Activated CD4-positive, alpha-beta T cell treated with anti-CD3 and anti-CD28 coated beads, Interleukin-2, amount 10 ng/mL, durations not matched to agents 7 days and 5 days (primary cell): ENCODE measurements at regions of chr17 and their contacts with region 1.

Region 1: DNA sequence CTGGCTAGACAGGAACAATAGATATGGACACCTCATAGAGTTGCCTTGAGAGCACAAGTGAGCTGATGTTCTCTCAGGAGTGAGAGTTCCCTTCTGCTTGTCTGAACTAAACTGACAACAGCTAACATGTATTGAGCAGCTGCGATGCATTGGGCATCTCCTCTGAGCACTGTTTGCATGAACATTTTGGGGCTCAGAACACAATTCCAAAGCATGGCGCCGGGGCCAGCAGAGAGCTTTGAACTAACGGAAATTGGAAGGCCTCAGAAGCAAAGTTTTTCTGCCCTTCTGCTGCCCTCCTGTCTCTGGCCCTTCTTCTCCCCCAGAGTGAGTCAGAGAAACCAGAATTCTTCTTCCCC is 38.1 kb downstream of the TRPV2 start:
- DNase-seq: no peak
- H3K4me3 Mint-ChIP-seq: no peak overlapping the region
- H3K27ac Mint-ChIP-seq: peak overlapping the region; percentile 71
- H3K4me1 Mint-ChIP-seq: peaks cover 10% of the 10 kb centered on the region
- H3K27me3 Mint-ChIP-seq: no peaks in the 10 kb centered on the region

Region 2: DNA sequence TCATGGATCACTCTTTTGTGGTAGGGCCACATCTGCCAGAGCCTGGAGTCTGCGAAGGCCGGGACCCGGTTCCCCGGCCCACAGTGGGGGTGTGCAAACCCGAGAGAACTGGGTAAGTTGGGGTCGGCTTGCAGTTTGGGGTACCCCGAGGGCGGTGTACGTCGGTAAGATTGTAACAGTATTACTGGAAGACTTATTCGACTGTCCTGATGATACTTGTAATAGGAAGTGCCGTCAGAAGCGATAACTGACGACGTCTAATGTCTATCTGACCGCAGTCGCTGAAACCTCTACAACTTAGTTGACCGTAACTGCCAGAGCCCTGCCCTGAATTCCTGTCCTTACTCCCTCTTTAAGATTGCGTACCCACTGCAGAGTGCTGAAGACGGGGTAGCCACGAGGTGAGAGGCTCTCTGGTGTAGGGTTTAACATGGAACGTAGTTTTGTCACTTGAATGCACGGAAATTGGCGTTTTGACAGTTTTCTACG is 14.1 kb before region 1 on chr17:
- CTCF ChIA-PET with region 1: interaction called, 27 read pairs
- POLR2A ChIA-PET with region 1: no interaction called
- DNase-seq: peak; percentile 27
- H3K4me3 Mint-ChIP-seq: peak overlapping the region; percentile 100
- H3K27ac Mint-ChIP-seq: peak overlapping the region; percentile 99
- H3K4me1 Mint-ChIP-seq: peaks cover 59% of the 10 kb centered on the region
- H3K27me3 Mint-ChIP-seq: no peaks in the 10 kb centered on the region

Region 3: GRCh38 chr17:16463358-16464302 is 10.2 kb after region 1 on chr17:
- CTCF ChIA-PET with region 1: interaction called, 15 read pairs
- POLR2A ChIA-PET with region 1: no interaction called
- DNase-seq: no peak
- H3K4me3 Mint-ChIP-seq: no peak overlapping the region
- H3K27ac Mint-ChIP-seq: no peak overlapping the region
- H3K4me1 Mint-ChIP-seq: no peaks in the 10 kb centered on the region
- H3K27me3 Mint-ChIP-seq: no peaks in the 10 kb centered on the region

Region 4: DNA sequence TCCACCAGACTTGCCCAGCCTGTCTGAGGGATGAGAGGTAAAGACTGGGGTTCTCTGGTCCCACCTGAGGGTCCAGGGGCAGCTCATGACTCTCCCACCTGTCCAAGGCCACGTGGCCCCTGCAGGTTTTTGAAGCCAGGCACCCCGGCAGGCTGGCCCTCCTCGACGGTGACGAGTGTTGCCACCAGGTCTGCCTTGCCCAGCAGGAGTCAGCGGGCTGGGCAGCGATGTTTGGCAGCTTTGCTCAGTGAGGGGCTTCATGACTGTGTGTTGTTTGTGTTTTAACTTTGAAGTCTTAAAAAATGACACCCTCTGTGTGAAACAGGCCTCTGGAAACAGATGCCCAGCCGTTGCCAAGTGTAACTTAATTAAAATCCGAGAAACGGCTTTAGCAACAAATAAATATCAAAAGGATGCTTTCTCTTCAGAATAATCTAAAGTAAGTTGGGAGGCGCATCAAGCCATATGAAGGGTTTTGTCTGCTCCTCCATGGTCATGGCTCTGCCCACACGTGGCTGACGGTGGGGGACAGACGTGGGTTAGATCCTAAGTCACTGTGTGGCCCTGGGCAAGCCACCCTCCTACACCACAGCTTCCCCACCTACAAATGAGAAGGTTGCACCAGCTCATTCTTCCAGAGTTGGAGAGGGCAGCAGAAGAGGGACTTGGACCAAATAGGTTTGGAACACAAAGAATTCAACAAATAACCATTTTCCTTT is 20.3 kb after region 1 on chr17:
- CTCF ChIA-PET with region 1: no interaction called
- POLR2A ChIA-PET with region 1: no interaction called
- DNase-seq: no peak
- H3K4me3 Mint-ChIP-seq: no peak overlapping the region
- H3K27ac Mint-ChIP-seq: no peak overlapping the region
- H3K4me1 Mint-ChIP-seq: peaks cover 2% of the 10 kb centered on the region
- H3K27me3 Mint-ChIP-seq: no peaks in the 10 kb centered on the region